Endothelial cell of umbilical vein (primary cell): ENCODE measurements at regions of chr5 and their contacts with region 1.

Region 1: GRCh38 chr5:78467752-78468357 is 107.4 kb downstream of the SCAMP1 start:
- DNase-seq: peak; percentile 67
- H3K4me3 ChIP-seq: no peak overlapping the region
- H3K27ac ChIP-seq: no peak overlapping the region
- H3K4me1 ChIP-seq: peaks cover 2% of the 10 kb centered on the region
- H3K27me3 ChIP-seq: no peaks in the 10 kb centered on the region
- CTCF ChIP-seq: peak; percentile 50 to 59
- POLR2A ChIP-seq: no peak

Region 2: DNA sequence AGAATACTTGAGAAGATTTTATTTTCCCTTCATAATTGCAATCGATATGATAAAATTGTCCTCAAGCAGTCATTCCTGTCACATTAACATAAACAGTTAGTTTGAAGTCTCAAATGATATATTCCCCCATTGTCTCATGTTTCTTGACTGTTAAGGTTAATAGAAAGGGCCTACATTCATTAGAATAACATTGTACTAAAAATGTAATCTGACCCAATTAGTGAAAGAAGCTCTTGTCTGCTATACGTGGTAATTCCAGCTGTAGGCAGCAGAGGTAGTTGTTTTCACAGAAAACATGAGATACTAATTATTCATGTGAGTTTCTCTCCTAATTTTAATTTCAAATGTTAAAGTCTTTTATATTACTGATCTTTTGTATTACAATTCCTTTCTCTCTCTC is 147.5 kb before region 1 on chr5:
- CTCF ChIA-PET with region 1: interaction called, 16 read pairs
- POLR2A ChIA-PET with region 1: no interaction called
- dilution Hi-C with region 1: no loop called
- intact Hi-C with region 1: loop called (anchors 5 kb)
- DNase-seq: peak; percentile 66
- H3K4me3 ChIP-seq: no peak overlapping the region
- H3K27ac ChIP-seq: no peak overlapping the region
- H3K4me1 ChIP-seq: no peaks in the 10 kb centered on the region
- H3K27me3 ChIP-seq: no peaks in the 10 kb centered on the region
- CTCF ChIP-seq: peak; percentile 27
- POLR2A ChIP-seq: no peak

Region 3: DNA sequence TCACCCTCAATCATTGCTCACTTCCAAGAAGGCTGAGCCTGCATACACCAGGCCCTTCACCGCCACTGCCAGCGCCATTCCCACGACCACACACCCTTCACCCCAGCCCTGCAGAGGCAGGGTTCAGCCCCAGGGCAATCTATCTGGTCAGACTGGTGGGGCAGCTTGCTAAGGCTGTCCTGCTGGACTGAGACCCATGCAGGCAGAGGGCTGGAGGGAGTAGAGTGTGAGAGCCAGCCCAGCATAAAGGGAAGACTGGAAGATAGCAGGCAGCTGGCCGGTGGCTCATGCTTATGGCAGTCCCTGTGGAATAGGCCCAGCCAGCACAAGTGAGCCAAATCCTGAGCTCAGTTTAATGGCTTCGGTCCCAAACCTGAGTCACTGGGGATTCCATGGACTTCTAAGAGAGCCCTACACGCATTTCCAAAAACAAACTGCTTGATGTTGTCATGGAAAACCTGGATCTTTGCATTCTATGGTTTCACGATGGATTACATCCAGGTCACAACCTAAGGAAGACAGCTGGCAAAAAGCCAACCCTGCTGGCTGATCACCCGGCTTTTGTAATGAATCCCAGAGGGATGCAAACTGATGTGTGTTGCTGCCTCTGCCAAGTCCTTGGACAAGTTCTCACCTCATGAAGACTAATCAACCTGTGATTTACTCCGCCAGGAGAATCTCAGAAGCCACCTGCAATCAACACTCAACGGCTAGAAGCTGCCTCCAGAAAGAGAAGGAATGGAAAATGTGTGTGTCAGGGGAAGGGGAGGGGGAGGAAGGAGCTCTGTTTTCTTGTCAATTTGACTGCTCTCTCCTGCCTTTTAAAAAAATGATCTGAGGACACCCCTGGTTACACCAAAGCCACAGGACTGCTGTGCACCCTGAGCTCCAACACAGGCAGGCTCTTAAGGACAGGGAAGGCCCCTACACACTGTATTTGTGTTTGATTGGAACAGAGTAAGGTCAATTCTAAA is 37.1 kb after region 1 on chr5:
- CTCF ChIA-PET with region 1: interaction called, 9 read pairs
- POLR2A ChIA-PET with region 1: no interaction called
- dilution Hi-C with region 1: no loop called
- intact Hi-C with region 1: loop called (anchors 2 kb)
- DNase-seq: peak; percentile 100
- H3K4me3 ChIP-seq: no peak overlapping the region
- H3K27ac ChIP-seq: peak overlapping the region; percentile 86
- H3K4me1 ChIP-seq: peaks cover 18% of the 10 kb centered on the region
- H3K27me3 ChIP-seq: no peaks in the 10 kb centered on the region
- CTCF ChIP-seq: no peak
- POLR2A ChIP-seq: no peak

Region 4: GRCh38 chr5:78648359-78649210 is 180.7 kb after region 1 on chr5 and contains the start of gene LHFPL2:
- CTCF ChIA-PET with region 1: interaction called, 5 read pairs
- POLR2A ChIA-PET with region 1: no interaction called
- dilution Hi-C with region 1: no loop called
- intact Hi-C with region 1: loop called (anchors 1 kb)
- DNase-seq: peak; percentile 77
- H3K4me3 ChIP-seq: peak within 1 kb of the TSS; percentile 38 to 78 (median 62)
- H3K27ac ChIP-seq: peak within 1 kb of the TSS; percentile 82
- H3K4me1 ChIP-seq: peaks cover 19% of the 10 kb centered on the region
- H3K27me3 ChIP-seq: no peaks in the 10 kb centered on the region
- CTCF ChIP-seq: no peak
- POLR2A ChIP-seq: no peak
- total RNA-seq, gene LHFPL2: 26.8 and 36.3 TPM in 2 replicates

Region 5: DNA sequence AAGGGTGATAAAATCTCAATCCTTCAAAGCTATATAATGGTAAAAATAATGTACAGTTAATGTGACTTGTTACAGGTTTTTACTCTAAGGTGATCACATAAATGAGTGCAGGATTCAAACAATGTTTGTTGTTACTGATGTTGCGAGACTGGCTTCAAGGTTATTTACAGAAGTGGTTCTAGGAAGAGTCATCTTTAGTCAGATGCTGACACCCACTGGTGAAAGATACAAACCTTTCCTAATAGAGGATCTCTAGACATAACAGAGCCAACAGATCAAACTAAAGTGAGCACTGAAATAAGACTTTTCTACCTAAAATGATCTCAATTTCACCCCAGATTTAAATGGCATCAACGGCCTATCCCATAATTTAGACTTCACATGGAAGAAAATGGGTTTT is 497.0 kb after region 1 on chr5:
- CTCF ChIA-PET with region 1: interaction called, 4 read pairs
- POLR2A ChIA-PET with region 1: no interaction called
- dilution Hi-C with region 1: no loop called
- intact Hi-C with region 1: loop called (anchors 5 kb)
- DNase-seq: peak; percentile 79
- H3K4me3 ChIP-seq: no peak overlapping the region
- H3K27ac ChIP-seq: no peak overlapping the region
- H3K4me1 ChIP-seq: no peaks in the 10 kb centered on the region
- H3K27me3 ChIP-seq: no peaks in the 10 kb centered on the region
- CTCF ChIP-seq: peak in 1 of 2 donors; percentile 18
- POLR2A ChIP-seq: no peak